SK-N-SH (cell line): ENCODE measurements at regions of chr10 and their contacts with region 1.

Region 1: DNA sequence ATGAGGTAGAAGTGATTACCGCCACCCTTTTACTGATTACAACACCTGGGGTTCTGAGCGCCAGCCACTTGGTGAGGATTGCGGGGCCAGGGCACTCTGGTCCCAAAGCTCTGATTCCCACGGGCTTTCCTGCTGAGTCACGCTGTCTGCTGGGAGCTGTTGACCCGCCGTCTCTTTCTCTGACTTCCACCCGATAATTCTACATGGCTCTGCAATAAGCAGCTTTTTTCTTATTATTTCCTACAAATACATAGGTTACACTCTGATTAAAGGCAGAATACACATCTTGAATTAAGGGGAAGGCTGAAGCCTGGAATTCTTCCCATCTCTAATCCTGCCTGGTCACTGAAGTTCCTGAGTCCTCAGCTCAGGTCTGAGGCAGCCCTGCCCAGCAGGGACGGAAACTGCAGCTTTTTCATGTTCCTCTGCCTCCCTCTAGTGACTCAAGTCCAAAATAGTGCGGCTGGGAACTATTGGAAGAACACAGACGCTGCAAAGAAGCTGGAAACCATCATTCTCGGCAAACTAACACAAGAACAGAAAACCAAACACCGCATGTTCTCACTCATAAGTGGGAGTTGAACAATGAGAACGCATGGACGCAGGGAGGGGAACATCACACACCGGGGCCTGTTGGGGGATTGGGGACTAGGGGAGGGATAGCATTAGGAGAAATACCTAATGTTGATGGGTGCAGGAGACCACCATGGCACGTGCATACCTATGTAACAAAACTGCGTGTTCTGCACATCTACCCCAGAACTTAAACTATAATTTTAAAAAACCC is 178.3 kb downstream of the PRKCQ start:
- DNase-seq: peak; percentile 82
- H3K4me3 ChIP-seq: peak overlapping the region; percentile 36 to 40; a peak in 3 of 4 replicates
- H3K27ac ChIP-seq: peak overlapping the region; percentile 23 to 78; a peak in 3 of 4 replicates
- H3K4me1 ChIP-seq: peaks cover 0 to 7% of the 10 kb centered on the region in 2 experiments; a peak in 1 of 4 replicates
- H3K27me3 ChIP-seq: no peaks in the 10 kb centered on the region
- CTCF ChIP-seq: peak; percentile 91
- EP300 ChIP-seq: no peak
- RAD21 ChIP-seq: peak; percentile 93

Region 2: GRCh38 chr10:6088721-6089390 is 312.9 kb before region 1 on chr10 and contains the start of gene RBM17:
- CTCF ChIA-PET with region 1: interaction called, 57 read pairs
- POLR2A ChIA-PET with region 1: no interaction called
- DNase-seq: peak; percentile 96
- H3K4me3 ChIP-seq: peak within 1 kb of the TSS; percentile 89 to 90
- H3K27ac ChIP-seq: peak within 1 kb of the TSS; percentile 36 to 63; a peak in 3 of 4 replicates
- H3K4me1 ChIP-seq: peaks cover 13% of the 10 kb centered on the region in 2 experiments; a peak in 3 of 4 replicates
- H3K27me3 ChIP-seq: 0 out of 2 replicates have a peak, but pooled peaks cover 6% of the 10 kb centered on the region
- CTCF ChIP-seq: peak; percentile 100
- EP300 ChIP-seq: no peak
- RAD21 ChIP-seq: peak; percentile 62
- polyA plus RNA-seq, gene RBM17: 32.6 and 34.2 TPM in 2 replicates

Region 3: DNA sequence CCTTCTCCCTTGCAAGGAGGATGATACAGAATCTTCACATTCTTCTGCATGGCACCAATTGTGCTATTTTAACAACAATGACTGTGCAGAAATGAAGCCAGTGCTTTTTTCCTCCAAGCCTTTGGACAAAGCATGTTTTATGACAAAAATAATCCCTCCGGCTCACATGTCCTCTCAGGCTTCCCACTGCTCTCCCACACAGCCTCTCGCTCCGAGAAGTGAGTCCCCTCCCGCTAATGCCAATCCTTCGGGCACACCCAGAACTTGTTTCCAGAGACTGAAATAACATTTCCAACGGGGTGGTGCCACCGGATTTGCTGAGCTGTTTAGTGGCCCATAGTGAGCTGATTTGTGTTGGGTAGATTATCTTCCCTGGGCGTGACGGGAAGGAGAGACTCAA is 277.1 kb before region 1 on chr10:
- CTCF ChIA-PET with region 1: interaction called, 24 read pairs
- POLR2A ChIA-PET with region 1: no interaction called
- DNase-seq: no peak
- H3K4me3 ChIP-seq: no peak overlapping the region
- H3K27ac ChIP-seq: no peak overlapping the region
- H3K4me1 ChIP-seq: peaks cover 0 to 7% of the 10 kb centered on the region in 2 experiments; a peak in 1 of 4 replicates
- H3K27me3 ChIP-seq: no peaks in the 10 kb centered on the region
- CTCF ChIP-seq: no peak
- EP300 ChIP-seq: no peak
- RAD21 ChIP-seq: no peak

Region 4: DNA sequence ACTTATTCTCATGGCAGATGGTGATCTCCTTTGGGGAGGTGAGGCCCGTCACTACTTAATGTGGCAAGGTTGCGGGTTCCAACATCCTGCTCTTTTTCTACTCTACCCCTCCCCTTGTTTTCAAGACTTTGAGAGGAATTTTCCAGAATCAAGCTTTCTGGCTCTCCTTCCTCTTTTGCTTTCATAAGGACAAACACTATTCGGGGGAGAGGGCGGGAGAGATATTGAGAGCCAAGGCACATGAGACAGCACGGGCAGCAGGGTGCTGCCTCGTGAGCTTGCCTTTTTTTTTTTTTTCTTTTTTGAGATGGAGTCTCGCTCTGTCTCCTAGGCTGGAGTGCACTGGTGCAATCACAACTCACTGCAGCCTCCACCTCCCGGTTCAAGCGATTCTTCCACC is 205.9 kb before region 1 on chr10:
- CTCF ChIA-PET with region 1: interaction called, 159 read pairs
- POLR2A ChIA-PET with region 1: interaction called, 29 read pairs
- DNase-seq: no peak
- H3K4me3 ChIP-seq: no peak overlapping the region
- H3K27ac ChIP-seq: no peak overlapping the region
- H3K4me1 ChIP-seq: peaks cover 3 to 12% of the 10 kb centered on the region in 2 experiments; a peak in 3 of 4 replicates
- H3K27me3 ChIP-seq: no peaks in the 10 kb centered on the region
- CTCF ChIP-seq: no peak
- EP300 ChIP-seq: no peak
- RAD21 ChIP-seq: no peak

Region 5: DNA sequence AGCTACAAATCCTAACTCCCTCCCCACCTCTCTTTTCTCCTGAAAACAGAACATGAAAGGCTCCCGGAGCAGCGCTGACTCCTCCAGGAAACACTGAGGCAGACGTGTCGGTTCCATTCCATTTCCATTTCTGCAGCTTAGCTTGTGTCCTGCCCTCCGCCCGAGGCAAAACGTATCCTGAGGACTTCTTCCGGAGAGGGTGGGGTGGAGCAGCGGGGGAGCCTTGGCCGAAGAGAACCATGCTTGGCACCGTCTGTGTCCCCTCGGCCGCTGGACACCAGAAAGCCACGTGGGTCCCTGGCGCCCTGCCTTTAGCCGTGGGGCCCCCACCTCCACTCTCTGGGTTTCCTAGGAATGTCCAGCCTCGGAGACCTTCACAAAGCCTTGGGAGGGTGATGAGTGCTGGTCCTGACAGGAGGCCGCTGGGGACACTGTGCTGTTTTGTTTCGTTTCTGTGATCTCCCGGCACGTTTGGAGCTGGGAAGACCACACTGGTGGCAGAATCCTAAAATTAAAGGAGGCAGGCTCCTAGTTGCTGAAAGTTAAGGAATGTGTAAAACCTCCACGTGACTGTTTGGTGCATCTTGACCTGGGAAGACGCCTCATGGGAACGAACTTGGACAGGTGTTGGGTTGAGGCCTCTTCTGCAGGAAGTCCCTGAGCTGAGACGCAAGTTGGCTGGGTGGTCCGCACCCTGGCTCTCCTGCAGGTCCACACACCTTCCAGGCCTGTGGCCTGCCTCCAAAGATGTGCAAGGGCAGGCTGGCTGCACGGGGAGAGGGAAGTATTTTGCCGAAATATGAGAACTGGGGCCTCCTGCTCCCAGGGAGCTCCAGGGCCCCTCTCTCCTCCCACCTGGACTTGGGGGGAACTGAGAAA is 168.7 kb before region 1 on chr10:
- CTCF ChIA-PET with region 1: interaction called, 10 read pairs
- POLR2A ChIA-PET with region 1: no interaction called
- DNase-seq: peak; percentile 12
- H3K4me3 ChIP-seq: no peak overlapping the region
- H3K27ac ChIP-seq: no peak overlapping the region
- H3K4me1 ChIP-seq: no peaks in the 10 kb centered on the region
- H3K27me3 ChIP-seq: no peaks in the 10 kb centered on the region
- CTCF ChIP-seq: no peak
- EP300 ChIP-seq: no peak
- RAD21 ChIP-seq: no peak

Region 6: GRCh38 chr10:6431861-6432260 is 30.1 kb after region 1 on chr10:
- CTCF ChIA-PET with region 1: no interaction called
- POLR2A ChIA-PET with region 1: no interaction called
- DNase-seq: no peak
- H3K4me3 ChIP-seq: no peak overlapping the region
- H3K27ac ChIP-seq: no peak overlapping the region
- H3K4me1 ChIP-seq: no peaks in the 10 kb centered on the region
- H3K27me3 ChIP-seq: peaks cover 11% of the 10 kb centered on the region; the same call in 1 of the 2 replicates
- CTCF ChIP-seq: no peak
- EP300 ChIP-seq: no peak
- RAD21 ChIP-seq: no peak